Caco-2 (cell line): ENCODE measurements at regions of chr12 and their contacts with region 1.

Region 1: GRCh38 chr12:24617471-24617870 is 331.4 kb downstream of the BCAT1 start:
- DNase-seq: no peak
- H3K4me3 ChIP-seq: no peak overlapping the region
- H3K4me3 Mint-ChIP-seq: peak overlapping the region; percentile 65
- H3K27ac Mint-ChIP-seq: peak overlapping the region; percentile 87
- H3K4me1 ChIP-seq: peaks cover 27% of the 10 kb centered on the region
- H3K4me1 Mint-ChIP-seq: peaks cover 31% of the 10 kb centered on the region
- H3K27me3 ChIP-seq: no peaks in the 10 kb centered on the region
- H3K27me3 Mint-ChIP-seq: no peaks in the 10 kb centered on the region
- CTCF ChIP-seq: no peak

Region 2: GRCh38 chr12:23757541-23757962 is 859.9 kb before region 1 on chr12:
- CTCF ChIA-PET with region 1: no interaction called
- POLR2A ChIA-PET with region 1: no interaction called
- intact Hi-C with region 1: no loop called
- DNase-seq: peak; percentile 61 to 79
- H3K4me3 ChIP-seq: no peak overlapping the region
- H3K4me3 Mint-ChIP-seq: peak overlapping the region; percentile 39
- H3K27ac Mint-ChIP-seq: peak overlapping the region; percentile 92
- H3K4me1 ChIP-seq: peaks cover 27% of the 10 kb centered on the region
- H3K4me1 Mint-ChIP-seq: peaks cover 44% of the 10 kb centered on the region
- H3K27me3 ChIP-seq: no peaks in the 10 kb centered on the region
- H3K27me3 Mint-ChIP-seq: no peaks in the 10 kb centered on the region
- CTCF ChIP-seq: no peak

Region 3: GRCh38 chr12:24695657-24696329 is 78.3 kb after region 1 on chr12:
- CTCF ChIA-PET with region 1: no interaction called
- POLR2A ChIA-PET with region 1: no interaction called
- intact Hi-C with region 1: loop called (anchors 5 kb)
- DNase-seq: no peak
- H3K4me3 ChIP-seq: no peak overlapping the region
- H3K4me3 Mint-ChIP-seq: no peak overlapping the region
- H3K27ac Mint-ChIP-seq: no peak overlapping the region
- H3K4me1 ChIP-seq: peaks cover 31% of the 10 kb centered on the region
- H3K4me1 Mint-ChIP-seq: peaks cover 22% of the 10 kb centered on the region
- H3K27me3 ChIP-seq: no peaks in the 10 kb centered on the region
- H3K27me3 Mint-ChIP-seq: no peaks in the 10 kb centered on the region
- CTCF ChIP-seq: no peak

Region 4: GRCh38 chr12:24798335-24798734 is 180.9 kb after region 1 on chr12:
- CTCF ChIA-PET with region 1: no interaction called
- POLR2A ChIA-PET with region 1: no interaction called
- intact Hi-C with region 1: no loop called
- DNase-seq: no peak
- H3K4me3 ChIP-seq: no peak overlapping the region
- H3K4me3 Mint-ChIP-seq: no peak overlapping the region
- H3K27ac Mint-ChIP-seq: no peak overlapping the region
- H3K4me1 ChIP-seq: peaks cover 6% of the 10 kb centered on the region
- H3K4me1 Mint-ChIP-seq: peaks cover 3% of the 10 kb centered on the region
- H3K27me3 ChIP-seq: no peaks in the 10 kb centered on the region
- H3K27me3 Mint-ChIP-seq: no peaks in the 10 kb centered on the region
- CTCF ChIP-seq: no peak